ENCODE measurements at regions of chr9 and their contacts with region 1.

Region 1: GRCh38 chr9:32589083-32589723 is 16.2 kb upstream of the NDUFB6 start:
- DNase-seq: no peak
- ATAC-seq: peak; percentile 68
- H3K4me3 Mint-ChIP-seq: no peak overlapping the region
- H3K27ac Mint-ChIP-seq: no peak overlapping the region
- H3K4me1 Mint-ChIP-seq: no peaks in the 10 kb centered on the region
- H3K27me3 Mint-ChIP-seq: peaks cover 39% of the 10 kb centered on the region

Region 2: DNA sequence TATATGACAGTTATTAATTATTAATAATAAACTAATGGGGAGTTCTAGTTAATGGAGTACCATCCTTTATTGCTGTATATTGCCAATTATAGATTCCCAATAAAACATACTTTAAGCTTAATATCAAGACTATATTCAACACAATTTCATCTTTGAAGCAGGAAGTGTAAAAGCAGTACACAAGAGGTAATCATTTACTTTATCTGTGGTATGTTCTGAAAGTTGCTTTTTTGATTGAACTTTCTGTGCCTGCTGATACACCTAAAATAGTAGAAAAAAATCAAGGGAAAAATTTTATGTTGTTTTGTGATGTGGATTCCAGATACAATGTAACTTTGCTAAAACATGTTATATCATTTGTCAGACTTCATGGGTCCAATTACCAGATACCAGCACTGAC is 146.8 kb before region 1 on chr9:
- CTCF ChIA-PET with region 1: no interaction called
- POLR2A ChIA-PET with region 1: no interaction called
- DNase-seq: no peak
- ATAC-seq: no peak
- H3K4me3 Mint-ChIP-seq: no peak overlapping the region
- H3K27ac Mint-ChIP-seq: no peak overlapping the region
- H3K4me1 Mint-ChIP-seq: no peaks in the 10 kb centered on the region
- H3K27me3 Mint-ChIP-seq: no peaks in the 10 kb centered on the region

Region 3: DNA sequence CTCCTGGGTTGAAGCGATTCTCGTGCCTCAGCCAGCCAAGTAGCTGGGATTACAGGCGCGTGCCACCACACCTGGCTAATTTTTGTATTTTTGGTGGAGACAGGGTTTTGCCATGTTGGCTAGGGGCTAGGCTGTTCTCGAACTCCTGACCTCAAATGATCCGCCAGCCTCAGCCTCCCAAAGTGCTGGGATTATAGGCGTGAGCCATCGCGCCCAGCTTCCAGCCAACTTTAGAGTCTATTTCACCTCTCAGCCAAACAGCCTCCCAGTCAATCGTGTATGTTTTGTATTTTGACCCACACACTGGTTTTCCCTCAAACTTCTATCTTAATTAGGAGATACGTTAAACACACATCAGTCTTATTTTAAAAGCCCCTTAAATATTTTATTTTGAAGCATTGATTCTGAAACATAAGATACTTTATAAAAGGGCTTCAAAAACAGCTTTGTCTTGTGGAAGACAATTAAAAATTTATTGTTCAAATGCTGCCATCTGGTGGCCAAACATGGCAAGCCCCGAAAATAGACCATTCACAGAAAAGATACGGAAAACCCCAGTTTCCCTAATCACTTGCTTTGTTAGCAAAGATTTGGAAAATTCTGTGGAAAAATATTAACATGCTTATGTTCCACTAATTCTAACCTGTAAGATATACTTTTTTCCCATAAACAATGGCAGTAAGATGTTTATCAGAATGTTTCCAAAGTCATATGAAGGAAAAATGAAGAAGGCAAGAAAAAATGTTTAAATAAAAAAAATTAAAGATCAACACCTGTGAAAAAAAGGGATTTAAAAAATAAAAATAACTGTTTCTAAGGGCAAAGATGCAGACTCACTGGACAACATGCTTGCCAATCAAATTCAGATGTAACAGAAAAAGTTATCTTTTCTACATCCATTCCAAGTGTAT is 379.2 kb after region 1 on chr9:
- CTCF ChIA-PET with region 1: interaction called, 48 read pairs
- POLR2A ChIA-PET with region 1: no interaction called
- DNase-seq: peak; percentile 69
- ATAC-seq: no peak
- H3K4me3 Mint-ChIP-seq: no peak overlapping the region
- H3K27ac Mint-ChIP-seq: no peak overlapping the region
- H3K4me1 Mint-ChIP-seq: no peaks in the 10 kb centered on the region
- H3K27me3 Mint-ChIP-seq: no peaks in the 10 kb centered on the region